Vagina (tissue), 2 donors: ENCODE measurements at regions of chr15 and their contacts with region 1.

Region 1: DNA sequence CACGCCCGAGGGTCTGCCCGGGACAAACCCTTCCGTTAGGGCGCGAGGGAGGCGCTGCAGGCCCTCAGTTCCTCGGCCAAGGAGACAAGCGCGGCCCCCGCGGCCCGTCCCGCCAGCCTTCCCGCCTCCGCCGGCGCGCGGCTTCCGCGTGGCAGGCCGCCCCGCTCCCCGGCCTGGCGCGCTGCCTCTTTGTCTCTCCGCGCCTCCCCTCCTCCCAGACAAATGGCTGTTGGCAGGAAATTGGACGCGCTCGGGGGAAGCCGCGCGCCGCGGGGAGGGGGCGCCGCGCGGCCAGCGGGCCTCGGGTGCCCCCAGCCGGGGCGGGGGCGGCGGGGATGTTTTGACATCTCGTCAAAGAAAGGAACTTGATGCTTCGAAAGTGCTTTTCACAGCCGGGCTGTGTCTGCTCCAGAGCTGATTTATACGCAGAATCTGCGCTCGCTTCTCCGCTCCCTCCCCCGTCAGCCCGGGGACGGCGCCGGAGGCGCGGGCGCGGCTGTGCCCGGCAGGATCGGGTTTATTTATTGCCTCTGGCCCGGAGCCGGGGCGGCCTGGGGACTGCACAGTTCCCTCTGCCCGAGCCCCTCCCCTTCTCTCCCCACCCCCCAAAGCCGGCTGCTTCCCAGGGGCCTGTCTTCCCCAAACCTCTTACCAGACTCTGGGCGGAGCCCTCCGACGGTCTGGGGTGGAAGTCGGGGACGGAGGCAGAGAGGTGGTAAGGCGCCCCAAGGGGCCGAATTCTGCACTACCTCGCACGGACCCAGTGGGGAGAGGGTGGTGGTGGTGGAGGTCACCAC is 20.7 kb downstream of the SHF start:
- DNase-seq: no peak
- H3K4me3 ChIP-seq: peak overlapping the region; percentile 64 to 83
- H3K27ac ChIP-seq: peak overlapping the region; percentile 99
- H3K4me1 ChIP-seq: peaks cover 33% of the 10 kb centered on the region
- H3K27me3 ChIP-seq: no peaks in the 10 kb centered on the region
- CTCF ChIP-seq: peak; percentile 9 to 52 (median 24)
- POLR2A ChIP-seq: no peak

Region 2: GRCh38 chr15:45200001-45200798 is 33.2 kb after region 1 on chr15:
- intact Hi-C with region 1: loop called (anchors 2 kb)
- DNase-seq: peak in 1 of 2 donors; percentile 99
- H3K4me3 ChIP-seq: peak overlapping the region; percentile 57 to 61
- H3K27ac ChIP-seq: peak overlapping the region; percentile 99
- H3K4me1 ChIP-seq: peaks cover 5% of the 10 kb centered on the region
- H3K27me3 ChIP-seq: no peaks in the 10 kb centered on the region
- CTCF ChIP-seq: no peak
- POLR2A ChIP-seq: peak in 1 of 2 donors; percentile 88

Region 3: DNA sequence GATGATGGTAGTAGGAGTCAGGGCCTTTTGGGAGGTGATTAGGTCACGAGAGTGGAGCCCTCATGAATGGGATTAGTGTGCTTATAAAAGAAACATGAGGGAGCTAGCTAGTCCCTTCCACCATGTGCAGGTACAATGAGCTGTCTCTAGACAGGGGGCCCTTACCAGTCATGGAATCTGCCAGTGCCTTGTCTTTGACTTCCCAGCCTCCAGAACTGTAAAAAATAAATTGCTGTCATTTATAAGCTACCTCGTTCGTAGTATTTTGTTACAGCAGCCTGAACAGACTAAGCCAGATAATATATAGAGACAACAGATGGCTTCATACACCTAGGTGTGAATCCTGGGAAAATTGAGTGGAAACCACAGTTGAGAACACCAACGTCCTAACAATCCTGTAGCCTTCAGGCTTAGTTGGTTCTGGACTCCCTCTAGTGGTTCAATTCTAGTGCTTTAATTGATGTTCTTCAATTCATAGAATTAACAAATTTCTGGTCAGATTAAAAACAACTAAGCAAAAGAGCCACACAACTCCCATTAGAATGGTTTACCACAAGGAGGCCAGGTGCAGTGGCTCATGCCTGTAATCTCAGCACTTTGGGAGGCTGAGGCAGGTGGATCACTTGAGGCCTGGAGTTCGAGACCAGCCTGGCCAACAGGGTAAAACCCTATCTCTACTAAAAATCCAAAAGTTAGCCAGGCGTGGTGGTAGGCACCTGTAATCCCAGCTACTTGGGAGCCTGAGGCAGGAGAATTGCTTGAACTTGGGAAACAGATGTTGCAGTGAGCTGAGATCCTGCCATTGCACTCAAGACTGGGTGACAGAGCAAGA is 232.6 kb after region 1 on chr15:
- intact Hi-C with region 1: loop called (anchors 2 kb)
- DNase-seq: no peak
- H3K4me3 ChIP-seq: no peak overlapping the region
- H3K27ac ChIP-seq: no peak overlapping the region
- H3K4me1 ChIP-seq: peaks cover 25% of the 10 kb centered on the region
- H3K27me3 ChIP-seq: no peaks in the 10 kb centered on the region
- CTCF ChIP-seq: peak in 2 of 3 experiments; percentile 58 to 67
- POLR2A ChIP-seq: no peak